Dendritic cell treated with granulocyte-macrophage colony-stimulating factor and Interleukin-4, amounts not matched to agents 40 ng/mL and 50 ng/mL, for 4 days (primary cell): ENCODE measurements at regions of chr6 and their contacts with region 1.

Region 1: GRCh38 chr6:32413427-32414047 is 6.6 kb upstream of the BTNL2 start:
- H3K4me3 Mint-ChIP-seq: no peak overlapping the region
- H3K27ac Mint-ChIP-seq: no peak overlapping the region
- H3K4me1 Mint-ChIP-seq: peaks cover 22% of the 10 kb centered on the region
- H3K27me3 Mint-ChIP-seq: peaks cover 44% of the 10 kb centered on the region

Region 2: GRCh38 chr6:32234934-32235333 is 178.6 kb before region 1 on chr6:
- intact Hi-C with region 1: no loop called
- H3K4me3 Mint-ChIP-seq: no peak overlapping the region
- H3K27ac Mint-ChIP-seq: no peak overlapping the region
- H3K4me1 Mint-ChIP-seq: no peaks in the 10 kb centered on the region
- H3K27me3 Mint-ChIP-seq: peaks cover 9% of the 10 kb centered on the region

Region 3: DNA sequence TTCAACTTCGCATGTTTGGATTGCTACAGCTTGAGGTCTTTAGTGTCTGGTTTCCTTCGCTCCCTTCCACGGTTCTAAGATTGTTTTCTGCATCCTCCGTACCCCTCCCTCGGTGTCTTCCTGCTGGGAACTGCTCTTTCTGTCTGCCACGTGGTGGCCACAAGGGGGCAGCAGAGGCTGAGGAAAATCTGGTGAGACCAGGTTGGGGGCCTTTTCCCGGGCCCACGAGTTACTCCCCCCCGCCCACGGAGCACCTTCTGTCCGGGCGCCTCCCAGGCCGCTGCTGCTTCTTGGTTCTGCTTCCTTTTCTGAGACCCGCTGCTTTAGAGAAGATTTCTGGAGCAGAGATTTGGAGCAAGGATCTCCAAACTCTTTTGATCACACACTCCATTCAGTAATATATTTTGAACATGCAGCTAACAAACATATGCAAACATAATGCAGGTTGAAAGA is 168.6 kb before region 1 on chr6:
- intact Hi-C with region 1: loop called (anchors 5 kb)
- H3K4me3 Mint-ChIP-seq: peak overlapping the region; percentile 39
- H3K27ac Mint-ChIP-seq: peak overlapping the region; percentile 77
- H3K4me1 Mint-ChIP-seq: peaks cover 14% of the 10 kb centered on the region
- H3K27me3 Mint-ChIP-seq: peaks cover 14% of the 10 kb centered on the region

Region 4: GRCh38 chr6:32700391-32701040 is 287.0 kb after region 1 on chr6:
- intact Hi-C with region 1: loop called (anchors 2 kb)
- H3K4me3 Mint-ChIP-seq: no peak overlapping the region
- H3K27ac Mint-ChIP-seq: peak overlapping the region; percentile 5
- H3K4me1 Mint-ChIP-seq: peaks cover 25% of the 10 kb centered on the region
- H3K27me3 Mint-ChIP-seq: peaks cover 39% of the 10 kb centered on the region

Region 5: DNA sequence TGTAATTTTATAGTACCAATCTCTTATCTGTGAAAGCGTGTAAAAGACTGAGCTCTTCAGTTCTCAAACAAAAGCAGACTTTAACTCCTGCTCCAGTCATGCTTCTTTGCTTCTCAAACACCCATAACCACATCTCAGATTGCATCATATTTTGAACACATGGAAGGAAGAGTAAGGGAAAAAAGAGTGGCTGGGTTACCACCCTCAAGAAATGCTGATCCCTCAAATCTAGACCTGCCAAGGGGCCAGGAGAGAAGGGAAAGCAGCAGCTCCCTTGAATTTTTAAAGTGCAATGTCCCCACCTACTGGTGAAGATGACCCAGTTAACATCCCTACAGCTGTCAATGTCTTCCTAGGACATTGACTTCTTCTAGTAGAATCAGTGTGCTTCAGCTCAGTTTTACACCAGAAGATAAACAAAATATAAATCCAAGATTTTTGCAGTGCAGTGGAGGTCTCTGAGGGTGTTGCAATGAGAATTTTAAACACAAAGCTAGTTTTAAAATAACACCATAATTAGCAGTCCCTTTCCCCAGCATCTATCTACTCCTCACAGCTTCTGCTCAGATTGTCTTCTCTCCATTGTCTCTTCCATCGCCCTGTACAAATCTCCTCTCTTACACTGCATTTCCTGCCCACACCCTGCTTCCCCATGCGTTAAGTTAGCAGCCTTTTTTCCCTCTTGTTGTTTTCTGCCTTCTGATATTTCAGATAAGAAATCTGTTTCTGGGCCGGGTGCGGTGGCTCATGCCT is 372.4 kb after region 1 on chr6:
- intact Hi-C with region 1: loop called (anchors 2 kb)
- H3K4me3 Mint-ChIP-seq: no peak overlapping the region
- H3K27ac Mint-ChIP-seq: peak overlapping the region; percentile 87
- H3K4me1 Mint-ChIP-seq: peaks cover 31% of the 10 kb centered on the region
- H3K27me3 Mint-ChIP-seq: peaks cover 4% of the 10 kb centered on the region

Region 6: GRCh38 chr6:32868257-32868788 is 454.8 kb after region 1 on chr6:
- intact Hi-C with region 1: loop called (anchors 5 kb)
- H3K4me3 Mint-ChIP-seq: no peak overlapping the region
- H3K27ac Mint-ChIP-seq: no peak overlapping the region
- H3K4me1 Mint-ChIP-seq: peaks cover 16% of the 10 kb centered on the region
- H3K27me3 Mint-ChIP-seq: peaks cover 24% of the 10 kb centered on the region